K562 (cell line): ENCODE measurements at regions of chr7 and their contacts with region 1.

Region 1: GRCh38 chr7:106041140-106041717 is 70.9 kb downstream of the SYPL1 start:
- DNase-seq: peak; percentile 87 to 95 (median 93)
- ATAC-seq: peak; percentile 91
- H3K4me3 ChIP-seq: no peak overlapping the region
- H3K27ac ChIP-seq: no peak overlapping the region
- H3K4me1 ChIP-seq: peaks cover 0 to 13% of the 10 kb centered on the region in 2 experiments; a peak in 3 of 5 replicates
- H3K27me3 ChIP-seq: peaks cover 5 to 34% of the 10 kb centered on the region in 2 experiments; a peak in 4 of 5 replicates
- CTCF ChIP-seq: peak; percentile 92 to 98 (median 92)
- EP300 ChIP-seq: no peak
- POLR2A ChIP-seq: no peak
- RAD21 ChIP-seq: peak; percentile 54 to 72

Region 2: GRCh38 chr7:105752671-105753275 is 288.5 kb before region 1 on chr7:
- CTCF ChIA-PET with region 1: interaction called, 3 read pairs
- POLR2A ChIA-PET with region 1: no interaction called
- in situ Hi-C with region 1: loop called (anchors 5 kb)
- intact Hi-C with region 1: no loop called
- DNase-seq: no peak
- ATAC-seq: no peak
- H3K4me3 ChIP-seq: no peak overlapping the region
- H3K27ac ChIP-seq: no peak overlapping the region
- H3K4me1 ChIP-seq: no peaks in the 10 kb centered on the region
- H3K27me3 ChIP-seq: peaks cover 0 to 18% of the 10 kb centered on the region in 2 experiments; a peak in 1 of 5 replicates
- CTCF ChIP-seq: no peak
- EP300 ChIP-seq: no peak
- POLR2A ChIP-seq: no peak
- RAD21 ChIP-seq: no peak

Region 3: DNA sequence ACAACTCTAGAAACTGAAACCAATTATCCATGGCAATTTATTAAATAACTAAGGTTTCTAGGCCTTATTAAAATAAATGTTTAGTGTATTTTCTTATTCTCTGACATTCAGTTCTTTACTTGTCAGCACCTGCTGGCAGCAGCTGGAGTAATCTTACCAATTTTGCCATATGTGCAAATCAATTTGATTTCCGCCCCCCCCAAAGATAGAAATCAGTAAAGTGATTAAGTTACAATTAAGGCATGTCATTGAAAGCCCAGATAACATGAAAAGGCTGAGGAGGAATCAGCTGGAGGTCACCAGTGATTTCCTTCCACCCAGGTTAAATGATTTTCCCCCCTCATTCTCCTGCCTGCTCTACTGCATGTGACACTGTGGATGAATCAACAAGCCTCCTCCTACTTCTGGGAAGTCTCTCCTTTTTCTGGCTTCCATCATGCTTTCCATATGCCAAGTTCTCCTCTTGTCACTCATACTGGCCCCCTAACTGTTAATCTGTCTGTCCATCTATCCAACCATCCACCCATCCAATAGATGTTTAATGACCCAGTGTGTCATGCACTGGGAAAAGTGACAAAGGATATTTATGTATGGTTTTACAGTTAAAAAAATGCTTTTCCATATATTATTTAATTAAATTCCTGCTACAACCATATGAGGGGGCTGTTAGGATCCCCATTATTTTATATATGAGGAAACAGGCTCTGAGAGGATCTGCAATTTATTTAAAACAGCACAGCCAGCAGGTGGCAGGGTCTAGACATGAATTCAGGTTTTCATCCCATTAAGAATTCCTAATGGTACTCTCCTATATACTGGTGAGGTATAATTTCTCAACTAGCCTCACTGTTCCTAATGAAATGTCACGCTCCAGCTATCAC is 281.3 kb before region 1 on chr7:
- CTCF ChIA-PET with region 1: interaction called, 88 read pairs
- POLR2A ChIA-PET with region 1: no interaction called
- in situ Hi-C with region 1: no loop called
- intact Hi-C with region 1: loop called (anchors 1 kb)
- DNase-seq: peak; percentile 29 to 55 (median 36)
- ATAC-seq: peak; percentile 73
- H3K4me3 ChIP-seq: no peak overlapping the region
- H3K27ac ChIP-seq: no peak overlapping the region
- H3K4me1 ChIP-seq: no peaks in the 10 kb centered on the region
- H3K27me3 ChIP-seq: peaks cover 0 to 11% of the 10 kb centered on the region in 2 experiments; a peak in 1 of 5 replicates
- CTCF ChIP-seq: peak; percentile 65 to 89 (median 71); a peak in 5 of 6 replicates
- EP300 ChIP-seq: no peak
- POLR2A ChIP-seq: no peak
- RAD21 ChIP-seq: peak; percentile 81 to 87

Region 4: DNA sequence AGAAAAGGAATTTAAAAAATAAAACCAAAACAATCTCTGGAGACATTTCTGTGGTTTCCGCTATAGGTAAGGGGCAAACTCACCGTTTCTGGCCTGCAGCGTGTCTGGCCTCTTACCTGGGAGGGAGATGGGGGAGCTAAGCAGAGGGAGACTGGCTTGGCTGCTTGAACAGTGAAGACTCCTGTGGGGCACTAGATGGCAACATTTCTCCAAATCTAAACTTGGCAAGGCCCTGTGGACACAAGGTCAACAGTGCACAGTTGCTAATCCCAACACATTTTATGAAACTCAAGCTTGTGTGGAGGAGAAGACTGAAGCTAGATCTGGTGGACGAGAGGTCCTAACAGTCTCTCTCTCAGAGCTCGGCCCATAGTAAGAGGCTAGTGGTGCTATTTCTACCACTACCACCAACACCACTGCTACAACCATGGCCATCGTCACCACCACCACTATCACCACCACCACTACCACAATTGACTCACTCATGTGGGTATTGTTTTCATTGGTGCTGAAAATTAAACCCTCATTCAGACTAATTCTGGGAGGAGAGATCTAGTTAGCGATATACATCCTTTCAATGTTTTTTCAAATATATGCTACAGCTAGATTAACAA is 106.5 kb before region 1 on chr7:
- CTCF ChIA-PET with region 1: interaction called, 3 read pairs
- POLR2A ChIA-PET with region 1: no interaction called
- in situ Hi-C with region 1: no loop called
- intact Hi-C with region 1: loop called (anchors 1 kb)
- DNase-seq: peak in 2 of 4 experiments; percentile 36 to 47
- ATAC-seq: peak; percentile 81
- H3K4me3 ChIP-seq: no peak overlapping the region
- H3K27ac ChIP-seq: no peak overlapping the region
- H3K4me1 ChIP-seq: no peaks in the 10 kb centered on the region
- H3K27me3 ChIP-seq: peaks cover 10 to 51% of the 10 kb centered on the region in 2 experiments
- CTCF ChIP-seq: peak; percentile 39 to 57 (median 55); a peak in 5 of 6 replicates
- EP300 ChIP-seq: no peak
- POLR2A ChIP-seq: no peak
- RAD21 ChIP-seq: peak; percentile 20 to 56; a peak in 2 of 4 replicates

Region 5: GRCh38 chr7:106009403-106010226 is 31.6 kb before region 1 on chr7:
- CTCF ChIA-PET with region 1: interaction called, 5 read pairs
- POLR2A ChIA-PET with region 1: no interaction called
- in situ Hi-C with region 1: no loop called
- intact Hi-C with region 1: loop called (anchors 2 kb)
- DNase-seq: peak; percentile 86 to 98 (median 94)
- ATAC-seq: peak; percentile 100
- H3K4me3 ChIP-seq: no peak overlapping the region
- H3K27ac ChIP-seq: no peak overlapping the region
- H3K4me1 ChIP-seq: peaks cover 9 to 15% of the 10 kb centered on the region in 2 experiments; a peak in 4 of 5 replicates
- H3K27me3 ChIP-seq: peaks cover 0 to 17% of the 10 kb centered on the region in 2 experiments; a peak in 1 of 5 replicates
- CTCF ChIP-seq: peak; percentile 98 to 100 (median 98)
- EP300 ChIP-seq: no peak
- POLR2A ChIP-seq: no peak
- RAD21 ChIP-seq: peak; percentile 89 to 95

Region 6: DNA sequence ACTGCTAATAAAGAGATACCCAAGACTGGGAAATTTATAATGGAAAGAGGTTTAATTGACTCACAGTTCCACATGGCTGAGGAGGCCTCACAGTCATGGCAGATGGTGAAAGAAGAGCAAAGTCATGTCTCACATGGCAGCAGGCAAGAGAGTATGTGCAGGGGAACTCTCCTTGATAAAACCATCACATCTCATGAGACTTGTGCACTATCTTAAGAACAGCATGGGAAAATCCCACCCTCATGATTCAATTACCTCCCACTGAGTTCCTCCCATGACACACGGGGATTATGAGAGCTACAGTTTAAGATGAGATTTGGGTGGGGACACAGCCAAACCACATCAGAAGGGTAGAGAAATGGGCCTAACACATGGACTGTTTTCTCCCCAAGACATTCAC is 463.4 kb after region 1 on chr7:
- CTCF ChIA-PET with region 1: no interaction called
- POLR2A ChIA-PET with region 1: no interaction called
- in situ Hi-C with region 1: no loop called
- intact Hi-C with region 1: no loop called
- DNase-seq: peak in 1 of 4 experiments; percentile 47
- ATAC-seq: no peak
- H3K4me3 ChIP-seq: no peak overlapping the region
- H3K27ac ChIP-seq: no peak overlapping the region
- H3K4me1 ChIP-seq: peaks cover 6 to 25% of the 10 kb centered on the region in 2 experiments; a peak in 4 of 5 replicates
- H3K27me3 ChIP-seq: no peaks in the 10 kb centered on the region
- CTCF ChIP-seq: no peak
- EP300 ChIP-seq: peak; percentile 9; the same call in 1 of the 2 replicates
- POLR2A ChIP-seq: no peak
- RAD21 ChIP-seq: no peak